ENCODE measurements at regions of chr5 and their contacts with region 1.

Region 1: DNA sequence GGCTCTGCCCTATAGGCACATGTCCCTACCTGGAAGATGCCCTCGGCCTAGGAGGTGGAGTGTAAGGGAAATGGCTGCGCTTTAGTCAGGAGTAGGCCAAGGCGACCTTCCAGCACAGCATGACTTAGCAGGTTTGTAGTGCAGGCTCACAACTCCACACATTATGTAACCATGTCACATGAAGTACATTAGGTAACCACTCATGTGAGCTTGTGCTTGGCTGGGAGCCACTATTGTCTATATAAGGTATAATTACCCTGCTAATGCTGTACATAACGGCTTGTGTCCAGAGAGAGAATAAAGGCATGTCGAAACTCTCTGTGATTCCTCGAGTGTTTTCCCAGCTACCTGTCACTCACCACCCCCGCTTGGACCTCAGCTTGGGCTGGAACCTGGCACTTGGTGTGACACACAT is 74.9 kb downstream of the CAMK4 start:
- DNase-seq: peak in 1 of 5 donors; percentile 6
- H3K4me3 ChIP-seq: no peak overlapping the region
- H3K4me3 Mint-ChIP-seq: peak overlapping the region in 3 of 8 donors; percentile 24 to 43 (median 36)
- H3K27ac ChIP-seq: no peak overlapping the region
- H3K27ac Mint-ChIP-seq: no peak overlapping the region
- H3K4me1 ChIP-seq: peaks cover 15% of the 10 kb centered on the region
- H3K4me1 Mint-ChIP-seq: peaks cover 23 to 40% (median 30%) of the 10 kb centered on the region in 4 donors
- H3K27me3 ChIP-seq: no peaks in the 10 kb centered on the region
- H3K27me3 Mint-ChIP-seq: no peaks in the 10 kb centered on the region

Region 2: DNA sequence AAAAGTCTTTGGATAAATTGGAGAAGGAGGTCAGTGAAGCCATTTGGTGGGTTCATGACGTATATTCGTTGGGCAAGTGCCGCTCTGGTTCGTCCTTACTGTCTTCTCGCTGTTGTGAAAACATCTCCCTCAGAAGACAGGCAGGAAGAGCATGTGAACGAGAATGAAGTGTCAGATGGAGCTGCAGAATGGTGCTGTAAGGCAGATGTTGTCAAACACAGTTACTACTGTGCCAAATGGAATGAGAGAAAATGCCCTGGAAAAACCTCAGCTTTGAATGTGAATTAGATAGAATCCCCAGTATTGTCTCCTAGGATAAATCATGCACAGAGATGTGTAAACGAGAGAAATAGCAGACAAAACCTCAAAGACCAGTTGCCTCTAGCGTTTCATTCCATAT is 46.7 kb after region 1 on chr5:
- CTCF ChIA-PET with region 1: no interaction called
- POLR2A ChIA-PET with region 1: no interaction called
- intact Hi-C with region 1: loop called (anchors 10 kb)
- DNase-seq: no peak
- H3K4me3 ChIP-seq: no peak overlapping the region
- H3K4me3 Mint-ChIP-seq: no peak overlapping the region
- H3K27ac ChIP-seq: no peak overlapping the region
- H3K27ac Mint-ChIP-seq: peak overlapping the region in 3 of 7 donors; percentile 19 to 61 (median 26)
- H3K4me1 ChIP-seq: peaks cover 4% of the 10 kb centered on the region
- H3K4me1 Mint-ChIP-seq: peaks cover 29 to 50% (median 44%) of the 10 kb centered on the region in 4 donors
- H3K27me3 ChIP-seq: no peaks in the 10 kb centered on the region
- H3K27me3 Mint-ChIP-seq: no peaks in the 10 kb centered on the region